OCI-LY7 (cell line): ENCODE measurements at regions of chr3 and their contacts with region 1.

Region 1: DNA sequence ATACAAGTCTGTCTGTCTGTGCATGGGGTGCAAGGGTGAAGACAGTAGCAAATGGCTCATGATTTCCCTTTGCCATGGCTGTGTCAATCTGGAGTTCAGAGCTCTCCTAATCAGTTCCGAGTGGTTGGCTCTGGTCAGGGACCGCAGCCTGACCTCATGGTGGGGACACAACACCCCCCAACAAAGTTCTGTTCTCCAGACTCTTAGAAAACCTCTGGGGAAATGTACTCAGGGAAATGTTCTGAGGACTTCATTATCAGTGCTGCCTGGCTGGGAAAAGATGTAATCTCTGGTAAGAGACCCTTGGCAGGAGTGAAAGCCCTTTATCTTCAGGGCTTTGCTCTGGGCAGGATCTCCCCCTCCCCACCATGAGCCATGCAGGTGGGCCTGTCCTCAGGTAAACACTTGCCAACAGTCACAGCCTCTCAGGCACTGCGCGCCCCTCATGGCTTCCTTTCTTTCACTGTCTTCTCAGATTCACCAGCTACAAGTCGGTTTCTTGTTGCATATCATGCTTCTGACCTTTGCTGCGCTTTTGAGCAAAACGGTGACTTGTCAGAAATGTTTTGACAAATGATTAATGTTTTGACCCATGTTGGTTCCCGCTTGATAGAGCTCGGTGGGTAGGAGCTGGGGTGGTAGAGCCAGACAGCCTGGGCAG is 95.5 kb downstream of the ST6GAL1 start:
- DNase-seq: peak; percentile 89
- H3K4me3 ChIP-seq: peak overlapping the region; percentile 94
- H3K27ac ChIP-seq: peak overlapping the region; percentile 98
- H3K4me1 ChIP-seq: peaks cover 72% of the 10 kb centered on the region
- CTCF ChIP-seq: no peak

Region 2: DNA sequence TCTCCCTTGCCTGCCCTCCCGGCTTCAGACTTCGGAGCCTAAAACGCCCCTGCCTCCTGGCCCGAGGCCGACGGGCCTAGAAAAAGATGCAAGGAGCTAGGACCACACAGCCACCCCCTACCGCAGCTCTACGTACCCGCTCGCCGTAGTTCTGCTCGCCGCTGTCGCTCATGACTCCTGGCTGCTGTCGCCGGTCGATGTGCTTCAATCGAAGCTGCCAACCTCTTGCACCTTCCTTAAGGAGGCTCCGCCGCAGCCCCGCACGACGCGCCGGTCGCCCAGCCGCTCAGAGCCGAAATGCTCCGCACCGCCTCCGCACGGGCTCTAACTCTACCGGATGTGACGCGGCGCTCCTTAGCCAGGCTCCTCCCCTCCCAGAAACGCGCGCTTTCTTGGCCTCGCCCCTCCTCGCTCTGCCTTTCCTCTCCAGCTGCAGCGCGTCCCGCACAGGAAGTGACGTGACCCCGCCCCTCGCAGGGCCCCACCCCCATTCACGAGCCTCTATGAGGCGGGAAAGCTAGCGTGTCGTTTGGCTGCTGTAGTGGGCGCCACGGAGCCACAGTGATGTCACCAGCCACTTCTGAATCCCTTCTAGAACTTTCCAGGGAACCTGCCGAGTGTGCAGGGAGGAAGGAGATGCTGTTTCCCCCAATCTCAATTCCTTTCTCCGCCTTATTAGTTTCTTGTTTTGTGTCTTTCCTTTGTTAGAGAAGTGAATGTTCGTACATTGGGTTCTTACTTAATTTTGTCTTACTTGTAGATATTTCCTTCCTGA is 1087.9 kb before region 1 on chr3 and contains the start of gene TRA2B:
- CTCF ChIA-PET with region 1: no interaction called
- POLR2A ChIA-PET with region 1: no interaction called
- intact Hi-C with region 1: loop called (anchors 10 kb)
- DNase-seq: peak; percentile 98
- H3K4me3 ChIP-seq: peak within 1 kb of the TSS; percentile 92
- H3K27ac ChIP-seq: peak within 1 kb of the TSS; percentile 88
- H3K4me1 ChIP-seq: peaks cover 22% of the 10 kb centered on the region
- CTCF ChIP-seq: peak; percentile 62
- total RNA-seq, gene TRA2B: 349 and 420 TPM in 2 replicates

Region 3: GRCh38 chr3:186930641-186931531 is 94.9 kb before region 1 on chr3:
- CTCF ChIA-PET with region 1: no interaction called
- POLR2A ChIA-PET with region 1: interaction called, 8 read pairs
- intact Hi-C with region 1: loop called (anchors 2 kb)
- DNase-seq: peak; percentile 88
- H3K4me3 ChIP-seq: peak overlapping the region; percentile 88
- H3K27ac ChIP-seq: peak overlapping the region; percentile 50
- H3K4me1 ChIP-seq: peaks cover 37% of the 10 kb centered on the region
- CTCF ChIP-seq: peak; percentile 67

Region 4: GRCh38 chr3:186994000-186994955 is 31.5 kb before region 1 on chr3:
- CTCF ChIA-PET with region 1: interaction called, 8 read pairs
- POLR2A ChIA-PET with region 1: interaction called, 106 read pairs
- intact Hi-C with region 1: loop called (anchors 1 kb)
- DNase-seq: peak; percentile 82
- H3K4me3 ChIP-seq: peak overlapping the region; percentile 35
- H3K27ac ChIP-seq: peak overlapping the region; percentile 98
- H3K4me1 ChIP-seq: peaks cover 79% of the 10 kb centered on the region
- CTCF ChIP-seq: no peak

Region 5: GRCh38 chr3:187044206-187044605 is 18.4 kb after region 1 on chr3:
- CTCF ChIA-PET with region 1: no interaction called
- POLR2A ChIA-PET with region 1: interaction called, 15 read pairs
- intact Hi-C with region 1: loop called (anchors 1 kb)
- DNase-seq: peak; percentile 84
- H3K4me3 ChIP-seq: peak overlapping the region; percentile 56
- H3K27ac ChIP-seq: peak overlapping the region; percentile 90
- H3K4me1 ChIP-seq: peaks cover 72% of the 10 kb centered on the region
- CTCF ChIP-seq: no peak

Region 6: DNA sequence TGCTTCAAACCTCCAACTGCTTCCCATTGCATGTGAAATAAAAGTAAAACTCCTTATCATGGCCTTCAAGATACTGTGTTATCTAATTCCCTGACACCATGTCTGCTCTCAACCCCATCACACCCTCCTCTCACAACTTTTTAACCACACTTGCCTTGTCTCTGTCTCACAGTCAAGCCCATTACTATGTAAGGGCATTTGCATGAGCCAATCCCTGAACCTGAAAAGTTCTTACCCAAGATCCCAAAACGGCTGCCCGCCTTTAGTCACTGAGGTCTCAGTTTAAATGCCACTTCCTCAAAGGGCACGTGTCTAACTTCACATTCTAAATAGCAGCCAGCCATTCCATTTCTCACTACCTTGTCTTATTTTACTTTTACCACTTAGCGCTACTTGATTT is 561.3 kb after region 1 on chr3:
- CTCF ChIA-PET with region 1: no interaction called
- POLR2A ChIA-PET with region 1: no interaction called
- intact Hi-C with region 1: no loop called
- DNase-seq: no peak
- H3K4me3 ChIP-seq: no peak overlapping the region
- H3K27ac ChIP-seq: no peak overlapping the region
- H3K4me1 ChIP-seq: no peaks in the 10 kb centered on the region
- CTCF ChIP-seq: no peak